ENCODE measurements at regions of chr2 and their contacts with region 1.

Region 1: GRCh38 chr2:195664528-195664927 is 7.5 kb downstream of the SLC39A10 start:
- DNase-seq: no peak
- H3K4me3 ChIP-seq: no peak overlapping the region
- H3K27ac ChIP-seq: no peak overlapping the region
- H3K4me1 ChIP-seq: peaks cover 17% of the 10 kb centered on the region
- H3K27me3 ChIP-seq: no peaks in the 10 kb centered on the region
- CTCF ChIP-seq: peak; percentile 52; the same call in 1 of the 2 replicates

Region 2: DNA sequence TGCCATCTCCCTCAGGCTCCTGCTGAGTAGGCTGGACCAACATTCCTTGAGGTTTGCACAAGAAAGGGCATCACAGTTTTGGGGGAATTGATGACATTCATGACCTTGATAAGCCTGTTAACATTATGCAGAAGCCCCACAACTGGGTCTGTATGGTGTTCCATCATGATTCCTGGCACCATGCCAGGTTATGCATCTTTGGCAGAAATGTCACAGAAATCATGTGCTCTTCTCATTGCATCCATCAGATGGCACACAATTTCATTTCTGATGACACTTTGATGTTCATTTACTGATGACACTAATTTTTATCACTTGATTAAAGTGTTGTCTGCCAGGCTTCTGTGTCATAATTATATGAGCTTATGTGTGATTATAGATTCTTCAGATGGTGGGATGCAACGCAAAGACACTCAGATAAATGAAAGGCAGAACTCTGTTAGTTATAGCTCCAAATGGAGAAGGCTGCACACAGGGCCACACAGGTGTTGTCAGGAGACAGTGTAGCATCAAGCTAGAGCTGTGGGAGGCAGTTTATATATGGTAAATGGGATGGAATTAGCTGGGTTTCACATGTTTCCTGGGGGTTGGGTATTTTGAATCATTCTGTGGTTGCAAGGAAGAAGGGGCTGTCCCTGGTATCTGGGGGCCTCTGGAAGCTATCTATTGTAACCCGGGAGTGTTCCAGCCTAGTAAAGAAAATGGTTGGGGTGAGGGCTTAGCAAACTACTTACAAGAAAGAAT is 183.8 kb after region 1 on chr2:
- CTCF ChIA-PET with region 1: no interaction called
- POLR2A ChIA-PET with region 1: no interaction called
- intact Hi-C with region 1: no loop called
- DNase-seq: peak; percentile 53
- H3K4me3 ChIP-seq: no peak overlapping the region
- H3K27ac ChIP-seq: no peak overlapping the region
- H3K4me1 ChIP-seq: no peaks in the 10 kb centered on the region
- H3K27me3 ChIP-seq: no peaks in the 10 kb centered on the region
- CTCF ChIP-seq: 0 out of 2 replicates have a peak, but pooled peaks have one; percentile 27

Region 3: DNA sequence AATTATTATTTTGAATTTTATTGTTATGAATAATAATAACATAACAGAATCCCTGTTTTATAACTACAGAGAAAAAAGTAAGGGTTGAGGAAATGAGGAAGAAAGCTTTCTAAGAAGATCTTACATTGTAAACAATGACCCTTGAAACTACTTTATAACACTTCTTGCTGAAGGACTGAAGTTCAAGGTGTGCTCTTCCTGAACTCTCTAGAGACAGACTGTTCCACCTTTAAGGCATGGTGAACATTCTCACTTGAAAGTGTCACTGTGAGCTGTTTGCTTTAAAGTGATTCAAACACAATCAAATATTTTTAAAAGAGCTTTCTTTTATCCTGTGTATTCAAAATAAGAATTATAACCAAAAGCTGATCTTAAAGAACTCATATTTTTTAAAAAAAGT is 272.6 kb after region 1 on chr2:
- CTCF ChIA-PET with region 1: interaction called, 7 read pairs
- POLR2A ChIA-PET with region 1: no interaction called
- intact Hi-C with region 1: loop called (anchors 2 kb)
- DNase-seq: no peak
- H3K4me3 ChIP-seq: no peak overlapping the region
- H3K27ac ChIP-seq: no peak overlapping the region
- H3K4me1 ChIP-seq: no peaks in the 10 kb centered on the region
- H3K27me3 ChIP-seq: no peaks in the 10 kb centered on the region
- CTCF ChIP-seq: no peak

Measured in A673 (cell line).